Esophagus squamous epithelium (tissue), 5 donors: ENCODE measurements at regions of chr4 and their contacts with region 1.

Region 1: DNA sequence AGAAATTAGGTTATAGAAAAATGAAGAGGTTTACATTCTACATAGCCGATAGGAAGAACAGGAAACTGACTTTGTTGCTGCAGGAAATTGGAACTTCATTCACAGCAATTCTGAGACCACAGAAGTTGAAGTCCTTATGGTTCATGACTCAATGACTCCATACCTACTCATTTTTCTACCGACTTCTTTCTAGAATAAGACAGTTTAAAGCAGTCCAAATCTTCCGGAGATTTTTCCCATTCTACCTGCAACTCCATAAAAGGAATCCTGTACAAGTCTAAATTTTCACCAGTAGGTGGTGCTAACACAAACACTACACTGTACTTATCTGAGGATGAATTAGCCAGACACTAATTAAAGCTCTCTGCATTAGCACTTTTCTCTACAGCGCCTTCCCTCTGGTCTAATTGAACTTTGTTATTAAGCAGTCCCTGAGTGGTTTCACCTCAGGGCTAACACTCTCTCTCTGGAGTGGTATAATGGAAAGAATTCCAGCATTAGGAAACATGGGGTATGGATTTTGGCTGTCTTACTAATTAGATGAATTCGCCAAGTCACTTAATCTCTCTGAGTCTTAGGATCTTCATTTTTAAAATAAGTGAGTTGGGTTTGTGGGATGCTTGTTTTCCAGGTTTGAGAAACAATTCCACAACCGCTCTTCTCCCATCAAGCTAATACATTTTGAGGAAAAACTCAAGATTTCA is 167.9 kb downstream of the SMIM20 start:
- DNase-seq: no peak
- H3K4me3 ChIP-seq: no peak overlapping the region
- H3K27ac ChIP-seq: no peak overlapping the region
- H3K4me1 ChIP-seq: peaks cover 0 to 39% (median 30%) of the 10 kb centered on the region in 3 donors
- H3K27me3 ChIP-seq: peaks cover 0 to 67% (median 0%) of the 10 kb centered on the region in 4 donors
- CTCF ChIP-seq: peak; percentile 48 to 80 (median 67)
- POLR2A ChIP-seq: no peak

Region 2: DNA sequence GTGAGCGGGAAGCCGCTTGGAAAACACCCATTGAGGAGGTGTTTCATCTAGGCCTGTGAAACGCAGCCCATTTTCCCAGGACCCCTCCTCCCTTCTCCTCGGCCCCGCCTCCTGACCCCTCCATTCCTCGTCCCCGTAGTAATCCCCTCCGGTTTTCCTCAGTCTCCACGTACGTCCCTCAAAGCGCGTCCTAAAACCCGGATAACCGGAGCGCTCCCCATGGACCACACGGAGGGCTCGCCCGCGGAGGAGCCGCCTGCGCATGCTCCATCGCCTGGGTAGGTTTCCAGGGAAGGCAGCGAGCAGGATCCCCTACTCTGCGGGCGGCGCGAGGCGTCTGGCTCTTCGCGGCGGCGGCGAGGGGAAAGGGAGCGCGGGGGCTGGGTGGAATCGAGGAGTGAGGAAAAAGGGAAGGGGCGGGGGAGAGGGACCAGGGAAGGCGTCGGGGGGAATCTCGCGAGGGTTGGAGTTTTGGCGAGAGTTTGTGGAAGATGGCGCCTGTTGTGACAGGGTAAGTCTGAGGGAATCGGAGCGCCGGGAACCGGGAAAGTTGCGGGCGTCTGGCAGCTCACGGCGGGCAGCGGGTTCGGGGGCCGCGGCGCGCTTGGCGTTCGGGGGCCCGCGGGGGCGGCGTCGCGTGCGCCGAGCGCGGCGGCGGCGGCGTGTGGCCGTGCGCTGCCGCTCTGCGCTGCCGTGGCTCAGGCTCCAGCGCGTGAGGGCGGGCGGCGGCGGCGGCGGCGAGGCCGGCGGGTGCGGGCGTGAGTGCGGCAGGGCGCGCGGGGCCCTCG is 238.8 kb after region 1 on chr4 and contains the start of gene RBPJ:
- intact Hi-C with region 1: loop called (anchors 10 kb)
- DNase-seq: peak; percentile 63
- H3K4me3 ChIP-seq: peak within 1 kb of the TSS; percentile 56 to 92 (median 72)
- H3K27ac ChIP-seq: peak within 1 kb of the TSS; percentile 92 to 99 (median 98)
- H3K4me1 ChIP-seq: peaks cover 0 to 58% (median 11%) of the 10 kb centered on the region in 3 donors
- H3K27me3 ChIP-seq: peaks cover 0 to 3% (median 0%) of the 10 kb centered on the region in 4 donors
- CTCF ChIP-seq: peak in 1 of 6 experiments; percentile 6
- POLR2A ChIP-seq: peak in 2 of 4 donors; percentile 67 to 79
- total RNA-seq, gene RBPJ: 28.7 to 65.6 (median 37.1) TPM